Head of caudate nucleus (tissue), 42 donors: ENCODE measurements at regions of chr1 and their contacts with region 1.

Region 1: GRCh38 chr1:114780344-114781226 is at the start of gene SIKE1:
- DNase-seq: peak; percentile 85 to 97 (median 94)

Region 2: DNA sequence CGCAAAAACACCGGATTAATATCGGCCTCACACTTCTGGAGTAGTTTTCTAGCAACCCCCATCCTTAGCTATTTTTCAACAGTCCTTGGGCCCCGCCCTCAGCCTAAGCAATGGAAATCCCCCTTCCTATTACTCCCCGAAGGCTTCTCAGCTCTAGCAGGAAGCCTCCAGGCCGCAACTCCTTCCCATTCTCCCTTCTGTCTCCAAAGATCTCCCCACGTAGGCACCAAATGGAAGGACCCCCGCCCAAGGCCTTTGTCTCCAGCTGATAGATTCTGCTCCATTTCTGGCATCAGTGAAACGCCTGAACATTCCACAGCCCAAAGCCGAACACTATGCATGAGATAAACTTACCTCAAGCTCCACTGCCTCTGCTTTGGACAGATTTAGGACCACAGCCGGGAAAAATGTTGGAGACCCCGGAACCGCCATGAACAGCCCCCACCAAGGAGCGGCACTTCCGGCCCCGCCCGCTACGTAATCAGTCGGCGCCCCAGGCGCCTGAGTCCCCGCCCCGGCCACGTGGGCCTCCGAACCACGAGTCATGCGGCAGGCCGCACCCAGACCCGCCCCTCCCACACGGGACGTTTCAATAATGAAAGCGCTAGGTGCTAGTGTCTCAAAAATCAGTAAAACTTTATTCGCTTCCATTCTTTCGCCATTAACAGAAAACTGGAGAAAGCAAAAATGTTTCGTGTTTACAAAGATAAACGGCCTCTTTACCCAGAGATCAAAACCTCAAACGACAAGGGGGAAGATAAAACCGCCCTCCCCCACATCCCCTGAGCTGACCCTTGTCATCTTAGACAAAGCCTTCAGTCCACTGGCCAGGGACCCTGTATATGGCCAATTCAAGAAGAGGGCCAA is 64.0 kb before region 1 on chr1 and contains the start of gene NRAS:
- intact Hi-C with region 1: loop called (anchors 10 kb)
- DNase-seq: peak; percentile 89 to 98 (median 95)

Region 3: GRCh38 chr1:114828251-114828650 is 47.7 kb after region 1 on chr1:
- intact Hi-C with region 1: no loop called
- DNase-seq: no peak